ENCODE measurements at regions of chr12 and their contacts with region 1.

Region 1: DNA sequence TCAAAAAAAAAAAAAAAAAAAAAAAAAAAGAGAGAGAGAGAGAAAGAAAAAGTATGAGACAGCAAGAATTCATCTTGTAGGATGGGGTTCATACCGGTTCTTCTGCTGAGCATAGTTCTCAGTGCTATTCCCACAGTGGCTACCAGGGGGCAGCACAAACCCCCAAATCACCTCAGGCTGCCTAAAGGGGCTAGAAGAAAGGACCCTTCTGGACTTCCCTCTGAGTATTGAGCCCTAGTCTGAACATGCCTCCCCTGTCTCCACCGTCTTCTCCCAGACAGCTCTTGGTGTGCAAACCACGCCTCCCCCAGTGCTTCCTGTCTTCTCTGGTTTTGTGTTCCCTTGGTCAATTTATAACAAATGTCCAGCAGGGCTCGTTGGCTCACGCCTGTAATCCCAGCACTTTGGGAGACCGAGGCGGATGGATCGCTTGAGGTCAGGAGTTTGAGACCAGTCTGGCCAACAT is 31.3 kb upstream of the SMUG1 start:
- DNase-seq: peak; percentile 49
- ATAC-seq: peak; percentile 36 to 56

Region 2: GRCh38 chr12:54324617-54325441 is 104.7 kb after region 1 on chr12 and contains the start of gene COPZ1:
- intact Hi-C with region 1: loop called in 1 of 2 experiments (anchors 1 kb)
- DNase-seq: peak; percentile 94
- ATAC-seq: peak; percentile 98 to 99
- total RNA-seq, gene COPZ1: 118 to 131 TPM

Region 3: GRCh38 chr12:54360717-54361456 is 140.8 kb after region 1 on chr12:
- intact Hi-C with region 1: loop called (anchors 2 to 5 kb)
- DNase-seq: peak; percentile 73
- ATAC-seq: peak in 1 of 2 donors; percentile 10

Measured in left cardiac atrium (tissue), 4 donors.